Mammary epithelial cell (primary cell): ENCODE measurements at regions of chr22 and their contacts with region 1.

Region 1: GRCh38 chr22:29820961-29821789 is 16.9 kb downstream of the ASCC2 start:
- DNase-seq: peak; percentile 97
- H3K4me3 ChIP-seq: no peak overlapping the region
- H3K27ac ChIP-seq: no peak overlapping the region
- H3K4me1 ChIP-seq: peaks cover 33% of the 10 kb centered on the region
- H3K27me3 ChIP-seq: no peaks in the 10 kb centered on the region
- CTCF ChIP-seq: no peak

Region 2: DNA sequence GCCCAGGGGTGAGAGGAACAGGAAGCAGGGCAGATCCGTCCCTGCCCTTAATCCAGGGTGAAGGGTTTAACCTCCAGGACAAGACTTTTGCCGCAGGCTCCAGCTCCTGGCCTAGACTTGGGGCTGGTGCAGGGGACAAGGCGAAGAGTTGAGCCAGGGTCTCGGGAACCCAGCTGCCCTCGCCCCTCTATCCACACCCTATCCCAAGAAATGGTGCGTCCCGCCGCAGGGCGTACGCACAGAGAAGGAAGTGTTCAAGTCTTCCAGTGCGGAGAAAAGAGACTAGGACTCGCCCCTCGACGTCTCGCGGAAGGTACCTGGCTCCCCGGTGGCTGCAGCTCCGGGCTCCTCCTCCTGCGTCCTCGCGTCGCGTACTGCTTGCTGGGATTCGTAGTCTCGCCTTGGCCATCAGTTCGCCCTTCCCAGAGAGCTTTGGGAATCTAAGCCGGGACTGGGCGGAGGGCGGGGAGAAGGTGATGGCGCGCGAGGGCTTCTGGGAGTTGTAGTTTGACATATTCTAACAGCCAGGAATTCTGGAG is 54.5 kb before region 1 on chr22 and contains the start of gene ZMAT5:
- CTCF ChIA-PET with region 1: no interaction called
- dilution Hi-C with region 1: no loop called
- in situ Hi-C with region 1: no loop called
- intact Hi-C with region 1: loop called (anchors 1 kb)
- DNase-seq: peak; percentile 97
- H3K4me3 ChIP-seq: peak within 1 kb of the TSS; percentile 72 to 97 (median 80)
- H3K27ac ChIP-seq: peak within 1 kb of the TSS; percentile 82
- H3K4me1 ChIP-seq: peaks cover 12% of the 10 kb centered on the region
- H3K27me3 ChIP-seq: no peaks in the 10 kb centered on the region
- CTCF ChIP-seq: no peak
- total RNA-seq, gene ZMAT5: 15.3 to 15.5 TPM

Region 3: DNA sequence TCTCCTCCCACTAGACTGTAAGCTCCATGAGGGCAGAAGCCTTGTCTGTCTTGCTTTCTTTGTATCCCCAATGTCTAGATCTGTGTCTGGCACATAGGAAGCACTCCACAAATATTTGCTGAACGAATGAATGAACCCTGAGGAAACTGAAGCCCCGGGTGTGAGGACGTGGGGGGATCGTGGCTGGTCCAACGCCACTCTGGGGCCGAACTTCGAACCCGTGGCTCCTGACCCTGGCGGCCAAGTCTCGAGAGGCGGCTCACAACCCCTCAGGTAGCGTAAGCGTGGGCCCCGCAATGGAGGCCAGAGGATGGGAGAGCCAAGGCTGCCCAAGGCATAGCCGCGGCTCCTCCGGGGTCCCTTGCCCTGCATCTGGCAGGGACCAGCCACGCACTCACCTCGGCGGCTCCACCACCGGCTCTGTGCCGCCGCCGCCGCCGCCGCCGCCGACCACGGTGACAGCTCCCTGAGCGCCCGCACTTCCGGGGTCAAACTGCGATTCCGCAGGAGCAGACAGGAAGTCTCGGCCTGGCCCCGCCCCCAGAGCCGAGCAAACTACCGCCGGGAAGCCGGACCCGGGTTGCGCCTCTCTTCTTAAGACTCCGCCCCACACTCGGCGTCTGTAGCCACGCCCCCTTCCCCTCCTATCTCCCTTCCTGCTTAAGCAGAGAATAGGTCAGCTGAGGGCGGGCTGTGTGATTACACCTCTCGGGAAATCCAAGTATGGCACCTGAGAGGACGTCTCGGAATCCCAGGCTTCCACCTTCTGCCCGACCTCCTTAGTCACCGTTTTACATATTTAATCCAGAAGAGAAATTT is 16.8 kb after region 1 on chr22 and contains the start of gene ASCC2:
- CTCF ChIA-PET with region 1: no interaction called
- dilution Hi-C with region 1: no loop called
- in situ Hi-C with region 1: no loop called
- intact Hi-C with region 1: loop called (anchors 2 kb)
- DNase-seq: peak; percentile 98
- H3K4me3 ChIP-seq: peak within 1 kb of the TSS; percentile 86 to 96 (median 91)
- H3K27ac ChIP-seq: peak within 1 kb of the TSS; percentile 67
- H3K4me1 ChIP-seq: peaks cover 24% of the 10 kb centered on the region
- H3K27me3 ChIP-seq: no peaks in the 10 kb centered on the region
- CTCF ChIP-seq: no peak
- total RNA-seq, gene ASCC2: 41.3 to 72.2 TPM

Region 4: GRCh38 chr22:29871684-29872083 is 50.5 kb after region 1 on chr22:
- CTCF ChIA-PET with region 1: no interaction called
- dilution Hi-C with region 1: no loop called
- in situ Hi-C with region 1: no loop called
- intact Hi-C with region 1: loop called (anchors 2 kb)
- DNase-seq: no peak
- H3K4me3 ChIP-seq: no peak overlapping the region
- H3K27ac ChIP-seq: no peak overlapping the region
- H3K4me1 ChIP-seq: peaks cover 16% of the 10 kb centered on the region
- H3K27me3 ChIP-seq: no peaks in the 10 kb centered on the region
- CTCF ChIP-seq: no peak

Region 5: DNA sequence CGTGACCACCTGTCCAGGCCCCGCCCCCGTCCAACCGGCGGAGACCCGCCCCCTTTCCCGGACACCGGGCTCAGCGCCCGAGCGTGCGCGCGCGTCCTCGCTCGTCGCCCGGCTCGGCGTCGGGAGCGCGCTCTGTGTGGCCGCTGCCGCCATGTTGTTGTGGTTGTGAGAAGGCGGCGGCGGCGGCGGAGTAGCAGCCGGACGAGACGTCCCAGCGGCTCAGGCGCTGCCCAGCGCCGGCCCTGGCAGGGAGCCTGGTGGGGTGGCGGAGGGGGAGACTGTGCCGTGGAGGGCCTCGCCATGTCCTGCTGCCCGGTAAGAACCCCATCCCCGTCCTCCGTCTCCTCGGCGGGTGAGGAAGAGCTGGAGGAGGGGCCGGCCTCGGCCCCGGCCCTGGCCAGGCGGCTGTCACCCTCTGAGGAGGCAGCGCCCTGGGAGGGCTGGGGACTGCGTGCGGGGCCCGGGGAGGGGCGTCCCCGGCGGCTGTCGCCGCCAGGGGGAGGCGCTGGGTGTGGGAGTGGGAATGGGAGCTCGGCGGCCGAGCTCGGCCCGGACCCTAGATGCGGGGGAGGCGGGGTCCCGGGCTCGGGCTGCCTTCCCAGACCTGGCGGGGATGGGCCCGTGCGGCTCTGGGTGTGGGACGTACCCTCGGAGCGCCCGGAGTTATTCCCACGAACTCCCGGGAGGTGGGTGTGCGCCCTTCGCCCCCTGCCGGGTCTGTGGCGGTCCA is 62.0 kb after region 1 on chr22 and contains the start of gene MTMR3:
- CTCF ChIA-PET with region 1: no interaction called
- dilution Hi-C with region 1: no loop called
- in situ Hi-C with region 1: no loop called
- intact Hi-C with region 1: loop called (anchors 2 kb)
- DNase-seq: peak; percentile 91
- H3K4me3 ChIP-seq: peak within 1 kb of the TSS; percentile 74 to 99 (median 87)
- H3K27ac ChIP-seq: peak within 1 kb of the TSS; percentile 71
- H3K4me1 ChIP-seq: no peaks in the 10 kb centered on the region
- H3K27me3 ChIP-seq: no peaks in the 10 kb centered on the region
- CTCF ChIP-seq: peak in 1 of 2 donors; percentile 43
- total RNA-seq, gene MTMR3: 34.1 to 67.2 TPM

Region 6: DNA sequence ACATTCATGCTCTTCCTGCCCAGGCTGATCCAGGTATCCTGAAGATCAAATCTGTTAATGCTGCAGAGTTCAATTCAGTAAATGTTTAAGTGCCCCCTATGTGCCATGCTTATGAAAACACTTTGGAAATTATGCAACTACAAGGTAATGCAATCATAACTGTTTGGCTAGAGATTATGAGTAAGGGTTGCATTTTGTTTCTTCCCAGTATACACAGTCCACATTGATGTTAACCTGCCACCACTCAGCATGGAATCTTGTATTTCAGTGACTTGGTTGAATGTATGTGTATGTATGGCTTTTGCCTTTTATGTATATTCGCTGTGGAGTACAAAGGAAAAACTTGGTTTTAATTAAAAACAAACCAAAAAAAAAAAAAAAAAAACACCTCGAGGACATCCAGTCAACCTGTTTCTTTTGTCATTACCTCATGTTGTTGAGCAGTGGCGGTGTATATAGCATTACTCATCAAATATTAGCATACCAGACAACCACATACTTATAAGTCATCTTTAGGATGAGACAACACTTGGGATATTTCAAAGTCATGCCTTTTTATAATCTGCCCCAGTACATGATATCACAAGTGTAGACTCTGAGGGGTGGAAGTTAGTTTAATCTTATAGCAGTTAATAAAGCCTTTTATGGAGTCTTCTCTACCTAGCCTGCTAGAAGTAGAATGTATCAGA is 173.0 kb after region 1 on chr22:
- CTCF ChIA-PET with region 1: no interaction called
- dilution Hi-C with region 1: no loop called
- in situ Hi-C with region 1: loop called in 1 of 2 experiments (anchors 25 kb)
- intact Hi-C with region 1: loop called (anchors 1 kb)
- DNase-seq: peak; percentile 89
- H3K4me3 ChIP-seq: no peak overlapping the region
- H3K27ac ChIP-seq: peak overlapping the region; percentile 81
- H3K4me1 ChIP-seq: peaks cover 36% of the 10 kb centered on the region
- H3K27me3 ChIP-seq: no peaks in the 10 kb centered on the region
- CTCF ChIP-seq: peak; percentile 31 to 58

Region 7: GRCh38 chr22:30005213-30005857 is 184.2 kb after region 1 on chr22:
- CTCF ChIA-PET with region 1: interaction called, 7 read pairs
- dilution Hi-C with region 1: no loop called
- in situ Hi-C with region 1: no loop called
- intact Hi-C with region 1: loop called (anchors 2 kb)
- DNase-seq: peak; percentile 57
- H3K4me3 ChIP-seq: no peak overlapping the region
- H3K27ac ChIP-seq: no peak overlapping the region
- H3K4me1 ChIP-seq: no peaks in the 10 kb centered on the region
- H3K27me3 ChIP-seq: no peaks in the 10 kb centered on the region
- CTCF ChIP-seq: peak; percentile 98 to 99